CD14-positive monocyte (primary cell): ENCODE measurements at regions of chr11 and their contacts with region 1.

Region 1: GRCh38 chr11:133123366-133123765 is 408.9 kb downstream of the OPCML start:
- DNase-seq: no peak
- H3K4me3 ChIP-seq: no peak overlapping the region
- H3K4me3 Mint-ChIP-seq: no peak overlapping the region
- H3K27ac ChIP-seq: no peak overlapping the region
- H3K27ac Mint-ChIP-seq: no peak overlapping the region
- H3K4me1 ChIP-seq: no peaks in the 10 kb centered on the region
- H3K4me1 Mint-ChIP-seq: no peaks in the 10 kb centered on the region
- H3K27me3 ChIP-seq: no peaks in the 10 kb centered on the region
- H3K27me3 Mint-ChIP-seq: peaks cover 0 to 3% (median 0%) of the 10 kb centered on the region in 3 donors
- CTCF ChIP-seq: no peak

Region 2: GRCh38 chr11:133821776-133822175 is 698.4 kb after region 1 on chr11:
- intact Hi-C with region 1: loop called in 1 of 2 experiments (anchors 5 kb)
- DNase-seq: no peak
- H3K4me3 ChIP-seq: no peak overlapping the region
- H3K4me3 Mint-ChIP-seq: no peak overlapping the region
- H3K27ac ChIP-seq: no peak overlapping the region
- H3K27ac Mint-ChIP-seq: no peak overlapping the region
- H3K4me1 ChIP-seq: no peaks in the 10 kb centered on the region
- H3K4me1 Mint-ChIP-seq: no peaks in the 10 kb centered on the region
- H3K27me3 ChIP-seq: no peaks in the 10 kb centered on the region
- H3K27me3 Mint-ChIP-seq: peaks cover 0 to 2% (median 0%) of the 10 kb centered on the region in 3 donors
- CTCF ChIP-seq: peak; percentile 44